ENCODE measurements at regions of chr4 and their contacts with region 1.

Region 1: DNA sequence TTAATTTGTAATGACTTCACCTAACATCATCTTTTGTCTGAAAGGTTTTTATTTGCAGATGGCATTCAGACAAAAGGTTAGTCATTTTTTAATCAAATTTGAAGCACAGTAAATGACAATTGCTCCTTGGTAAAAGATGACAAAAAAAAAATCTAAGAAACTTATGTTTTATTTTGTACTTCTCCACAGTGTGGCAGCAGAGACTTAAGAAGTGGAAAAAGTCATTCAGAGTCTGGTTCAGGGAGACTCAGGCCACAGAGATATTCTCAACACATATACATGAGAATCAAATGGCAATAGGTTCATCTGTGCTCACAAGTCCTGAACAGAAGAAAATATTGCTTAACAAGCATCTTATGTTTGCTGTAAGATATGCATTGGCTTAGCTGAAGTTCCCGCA is 436.2 kb downstream of the KCNIP4 start:
- DNase-seq: no peak
- H3K4me3 ChIP-seq: no peak overlapping the region
- H3K27ac ChIP-seq: no peak overlapping the region
- H3K4me1 ChIP-seq: no peaks in the 10 kb centered on the region
- H3K27me3 ChIP-seq: no peaks in the 10 kb centered on the region
- CTCF ChIP-seq: peak in 5 of 6 experiments; percentile 17 to 77 (median 47)
- POLR2A ChIP-seq: no peak

Region 2: GRCh38 chr4:21374641-21375368 is 137.5 kb before region 1 on chr4:
- intact Hi-C with region 1: no loop called
- DNase-seq: no peak
- H3K4me3 ChIP-seq: no peak overlapping the region
- H3K27ac ChIP-seq: no peak overlapping the region
- H3K4me1 ChIP-seq: no peaks in the 10 kb centered on the region
- H3K27me3 ChIP-seq: no peaks in the 10 kb centered on the region
- CTCF ChIP-seq: no peak
- POLR2A ChIP-seq: no peak

Region 3: DNA sequence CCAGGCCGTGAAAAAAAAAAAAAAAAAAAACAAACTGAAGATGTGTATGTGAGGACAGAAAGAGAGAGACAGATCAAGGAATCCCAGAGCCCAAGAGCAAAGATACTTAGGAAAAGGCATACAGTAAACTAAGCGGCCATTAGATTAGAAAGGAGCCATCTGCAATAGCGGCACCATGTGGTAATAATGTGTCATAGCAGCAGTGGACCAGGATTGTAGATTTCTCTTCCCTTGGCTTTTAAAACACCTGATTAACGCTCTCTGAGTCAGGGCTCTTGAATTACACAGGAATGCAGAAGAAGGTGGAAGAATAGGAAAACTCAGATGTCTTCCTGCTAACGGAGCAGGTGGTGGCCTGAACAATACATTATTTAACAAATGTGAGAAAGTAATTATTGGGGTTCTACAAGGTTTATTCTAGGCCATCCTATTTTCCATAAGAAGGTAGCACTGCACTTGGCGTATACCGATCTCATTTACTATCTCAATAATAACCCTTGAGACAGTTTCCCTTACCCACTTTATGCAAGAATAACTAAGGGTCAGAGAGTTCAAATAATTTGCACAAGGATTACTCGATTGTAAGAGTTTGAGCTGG is 253.6 kb after region 1 on chr4:
- intact Hi-C with region 1: loop called (anchors 2 kb)
- DNase-seq: peak; percentile 46 to 57
- H3K4me3 ChIP-seq: no peak overlapping the region
- H3K27ac ChIP-seq: no peak overlapping the region
- H3K4me1 ChIP-seq: no peaks in the 10 kb centered on the region
- H3K27me3 ChIP-seq: no peaks in the 10 kb centered on the region
- CTCF ChIP-seq: peak; percentile 59 to 87 (median 80)
- POLR2A ChIP-seq: no peak